CD4-positive, alpha-beta T cell (primary cell): ENCODE measurements at regions of chr19 and their contacts with region 1.

Region 1: DNA sequence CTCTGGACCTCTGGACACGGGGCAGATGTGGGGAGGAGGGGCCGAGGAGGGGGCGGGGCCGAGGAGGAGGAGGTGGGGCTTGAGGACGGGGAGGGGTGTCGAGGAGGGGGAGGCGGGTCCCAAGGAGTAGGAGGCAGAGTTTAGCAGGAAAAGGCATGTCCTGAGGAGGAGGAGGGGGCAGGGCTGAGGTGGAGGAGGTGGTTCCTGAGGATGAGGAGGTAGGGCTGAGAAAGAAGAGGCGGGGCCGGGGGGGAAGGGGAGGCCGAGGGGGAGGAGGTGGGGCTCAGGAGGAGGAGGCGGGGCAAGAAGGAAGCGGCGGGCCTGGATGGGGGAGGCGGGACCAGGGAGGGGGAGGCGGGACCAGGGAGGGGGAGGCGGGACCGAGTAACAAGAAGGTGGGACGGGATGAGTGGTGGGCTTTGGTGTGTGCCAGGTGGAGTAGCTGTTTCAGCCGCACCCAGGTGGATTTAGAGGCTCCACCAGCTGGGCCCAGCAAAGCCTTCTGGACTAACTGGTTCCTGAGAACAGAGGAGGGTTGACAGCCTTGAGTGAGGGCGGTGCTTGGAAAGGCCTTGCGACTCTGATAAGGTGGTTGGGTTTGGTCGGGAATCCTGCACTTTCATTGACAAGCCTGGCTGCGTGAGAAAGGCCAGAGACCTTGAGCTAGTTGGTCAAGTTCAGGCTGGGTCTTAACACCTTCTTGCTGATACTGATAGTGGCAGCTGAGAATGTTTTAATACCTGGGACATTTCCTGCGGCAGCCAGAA is 7.7 kb downstream of the TECR start:
- DNase-seq: peak in 8 of 14 experiments; percentile 31 to 70 (median 60)
- ATAC-seq: peak; percentile 73
- H3K4me3 ChIP-seq: no peak overlapping the region
- H3K4me3 Mint-ChIP-seq: no peak overlapping the region
- H3K27ac ChIP-seq: no peak overlapping the region
- H3K27ac Mint-ChIP-seq: no peak overlapping the region
- H3K4me1 ChIP-seq: peaks cover 49% of the 10 kb centered on the region
- H3K4me1 Mint-ChIP-seq: peaks cover 44% of the 10 kb centered on the region
- H3K27me3 ChIP-seq: no peaks in the 10 kb centered on the region
- H3K27me3 Mint-ChIP-seq: no peaks in the 10 kb centered on the region
- CTCF ChIP-seq: no peak

Region 2: DNA sequence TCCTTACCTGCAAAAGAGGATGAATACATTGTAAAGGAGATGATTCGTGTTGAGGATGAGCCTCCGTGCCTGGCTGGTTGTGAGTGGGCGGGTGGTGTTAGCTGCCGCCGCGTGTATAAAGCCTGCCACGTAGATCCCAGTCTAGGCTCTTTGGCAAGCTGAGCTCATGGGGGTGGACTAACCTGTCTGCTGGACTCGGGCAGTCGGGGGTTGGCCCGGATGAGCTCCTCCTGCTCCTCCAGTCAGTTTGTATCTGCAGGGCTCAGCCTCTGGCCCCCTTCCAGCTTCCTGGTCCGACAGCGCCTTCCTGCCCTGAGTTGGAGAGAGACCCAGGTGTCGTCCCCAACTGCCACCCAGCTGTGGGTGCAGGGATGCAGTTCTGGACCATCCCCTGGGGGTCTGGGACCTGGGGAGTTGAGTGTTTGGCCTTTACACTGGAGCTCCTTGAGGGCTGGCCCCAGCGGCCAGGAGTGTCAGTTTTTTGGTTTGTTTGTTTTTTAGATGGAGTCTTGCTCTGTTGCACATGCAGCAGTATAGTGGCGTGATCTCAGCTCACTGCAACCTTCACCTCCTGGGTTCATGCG is 13.2 kb after region 1 on chr19:
- CTCF ChIA-PET with region 1: interaction called, 11 read pairs
- POLR2A ChIA-PET with region 1: interaction called, 5 read pairs
- intact Hi-C with region 1: no loop called
- DNase-seq: no peak
- ATAC-seq: no peak
- H3K4me3 ChIP-seq: no peak overlapping the region
- H3K4me3 Mint-ChIP-seq: no peak overlapping the region
- H3K27ac ChIP-seq: no peak overlapping the region
- H3K27ac Mint-ChIP-seq: peak overlapping the region; percentile 92
- H3K4me1 ChIP-seq: peaks cover 54% of the 10 kb centered on the region
- H3K4me1 Mint-ChIP-seq: peaks cover 48% of the 10 kb centered on the region
- H3K27me3 ChIP-seq: no peaks in the 10 kb centered on the region
- H3K27me3 Mint-ChIP-seq: no peaks in the 10 kb centered on the region
- CTCF ChIP-seq: no peak

Region 3: GRCh38 chr19:14770944-14771839 is 234.1 kb after region 1 on chr19:
- CTCF ChIA-PET with region 1: no interaction called
- POLR2A ChIA-PET with region 1: no interaction called
- intact Hi-C with region 1: no loop called
- DNase-seq: no peak
- ATAC-seq: no peak
- H3K4me3 ChIP-seq: no peak overlapping the region
- H3K4me3 Mint-ChIP-seq: no peak overlapping the region
- H3K27ac ChIP-seq: no peak overlapping the region
- H3K27ac Mint-ChIP-seq: no peak overlapping the region
- H3K4me1 ChIP-seq: peaks cover 11% of the 10 kb centered on the region
- H3K4me1 Mint-ChIP-seq: peaks cover 4% of the 10 kb centered on the region
- H3K27me3 ChIP-seq: peaks cover 9 to 12% of the 10 kb centered on the region in 2 experiments
- H3K27me3 Mint-ChIP-seq: peaks cover 34% of the 10 kb centered on the region
- CTCF ChIP-seq: no peak